Activated T-helper 1 cell treated with anti-CD3 and anti-CD28 coated beads, Interleukin-12 subunit alpha, Interleukin-12 subunit beta, Interleukin-2, Interleukin-4 antibody, amounts not matched to agents 30 ng/mL and 10 ng/mL and 1 ng/mL, durations not matched to agents 14 hours and 24 hours and 36 hours (primary cell): ENCODE measurements at regions of chr12 and their contacts with region 1.

Region 1: GRCh38 chr12:120495723-120496412 is at the start of gene DYNLL1:
- DNase-seq: peak; percentile 98
- H3K4me3 Mint-ChIP-seq: peak within 1 kb of the TSS; percentile 99
- H3K27ac Mint-ChIP-seq: peak within 1 kb of the TSS; percentile 89
- H3K4me1 Mint-ChIP-seq: peaks cover 37% of the 10 kb centered on the region
- H3K27me3 Mint-ChIP-seq: no peaks in the 10 kb centered on the region
- total RNA-seq, gene DYNLL1: 341 and 356 TPM in 2 replicates

Region 2: DNA sequence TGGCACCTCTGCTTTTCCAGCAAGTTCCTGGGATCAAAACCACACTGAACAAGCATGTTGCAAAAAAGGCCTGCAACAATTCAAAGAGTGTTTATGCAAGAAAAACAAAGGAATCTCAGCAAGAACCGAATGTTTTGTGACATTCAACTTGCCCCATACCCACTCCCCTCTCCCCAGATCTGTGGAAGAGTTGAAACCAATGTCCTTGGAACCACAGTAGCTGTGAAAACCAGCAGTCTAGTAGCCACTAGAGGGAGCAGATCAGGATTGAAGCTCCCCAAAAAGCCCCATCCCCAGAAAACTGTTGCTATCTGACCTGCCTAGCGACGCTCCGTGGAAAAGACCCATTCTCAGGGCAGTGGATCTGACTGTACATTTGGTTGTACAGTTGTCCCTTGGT is 800.8 kb before region 1 on chr12:
- intact Hi-C with region 1: no loop called
- DNase-seq: no peak
- H3K4me3 Mint-ChIP-seq: no peak overlapping the region
- H3K27ac Mint-ChIP-seq: no peak overlapping the region
- H3K4me1 Mint-ChIP-seq: no peaks in the 10 kb centered on the region
- H3K27me3 Mint-ChIP-seq: no peaks in the 10 kb centered on the region

Region 3: GRCh38 chr12:120317224-120318105 is 178.4 kb before region 1 on chr12:
- intact Hi-C with region 1: loop called (anchors 1 kb)
- DNase-seq: peak; percentile 100
- H3K4me3 Mint-ChIP-seq: peak overlapping the region; percentile 89
- H3K27ac Mint-ChIP-seq: peak overlapping the region; percentile 92
- H3K4me1 Mint-ChIP-seq: peaks cover 16% of the 10 kb centered on the region
- H3K27me3 Mint-ChIP-seq: peaks cover 6% of the 10 kb centered on the region

Region 4: DNA sequence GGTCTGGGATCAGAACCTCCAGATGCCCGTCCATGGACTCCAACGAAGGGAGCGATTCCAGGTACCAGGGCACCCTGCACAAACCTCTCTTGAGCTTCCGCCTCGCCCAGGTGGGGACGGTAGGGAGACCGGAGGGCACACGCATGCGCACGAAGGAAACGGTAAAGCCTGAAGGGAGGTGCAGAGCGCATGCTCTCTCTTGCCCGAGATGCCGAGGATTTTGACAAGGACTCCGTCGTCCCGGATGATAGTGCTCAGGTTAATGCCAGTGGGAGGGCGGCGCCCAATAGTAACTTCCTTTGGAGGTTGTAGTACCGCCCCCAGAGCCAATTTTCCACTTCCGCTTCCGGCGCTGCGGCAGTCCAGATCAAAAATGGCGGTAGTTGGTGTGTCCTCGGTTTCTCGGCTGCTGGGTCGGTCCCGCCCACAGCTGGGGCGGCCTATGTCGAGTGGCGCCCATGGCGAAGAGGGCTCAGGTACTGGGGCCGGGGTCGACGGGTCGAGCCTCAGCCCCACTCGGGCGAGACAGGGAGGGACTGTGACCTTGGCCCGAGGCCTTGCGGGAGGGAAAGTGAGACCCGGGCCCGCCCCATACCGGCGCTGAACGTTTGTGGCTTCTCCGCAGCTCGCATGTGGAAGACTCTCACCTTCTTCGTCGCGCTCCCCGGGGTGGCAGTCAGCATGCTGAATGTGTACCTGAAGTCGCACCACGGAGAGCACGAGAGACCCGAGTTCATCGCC is 57.9 kb before region 1 on chr12 and contains the start of gene COX6A1:
- intact Hi-C with region 1: loop called (anchors 1 kb)
- DNase-seq: peak; percentile 97
- H3K4me3 Mint-ChIP-seq: peak within 1 kb of the TSS; percentile 100
- H3K27ac Mint-ChIP-seq: peak within 1 kb of the TSS; percentile 98
- H3K4me1 Mint-ChIP-seq: peaks cover 31% of the 10 kb centered on the region
- H3K27me3 Mint-ChIP-seq: no peaks in the 10 kb centered on the region
- total RNA-seq, gene COX6A1: 352 and 365 TPM in 2 replicates

Region 5: DNA sequence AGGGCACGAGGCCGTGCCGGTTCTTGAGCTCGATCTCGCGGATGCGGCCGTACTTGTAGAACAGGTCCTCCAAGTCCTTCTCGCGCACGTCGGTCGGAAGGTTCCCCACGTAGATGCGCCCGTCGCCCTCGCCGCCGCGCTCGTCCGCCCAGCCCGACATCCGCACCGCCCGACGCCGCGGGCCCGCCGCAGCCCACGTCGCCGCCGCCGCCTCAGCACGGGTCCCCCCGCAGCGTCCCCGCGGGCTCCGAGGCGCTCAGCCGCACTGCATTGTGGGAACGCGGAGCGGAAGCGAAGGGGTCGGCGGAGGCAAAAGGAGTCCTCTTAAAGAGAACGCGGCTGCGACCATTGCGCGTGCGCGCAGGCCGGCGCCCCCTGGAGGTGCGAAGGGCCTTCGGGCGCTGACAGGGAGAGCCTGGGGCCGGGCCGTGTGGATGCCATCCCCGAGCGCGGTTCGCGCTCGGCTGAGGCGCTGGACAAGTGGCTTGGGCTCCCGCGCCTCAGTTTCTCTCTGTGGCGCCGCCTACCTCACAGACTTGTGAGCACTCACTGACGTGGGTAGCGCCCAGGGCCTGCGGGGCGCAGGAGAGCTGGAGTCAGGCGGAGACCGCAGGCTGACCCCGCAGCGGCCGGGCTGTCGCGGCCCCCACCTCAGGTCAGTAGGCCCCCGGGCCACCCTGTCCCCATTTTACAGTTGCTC is 26.3 kb before region 1 on chr12 and contains the start of gene SRSF9:
- intact Hi-C with region 1: loop called (anchors 1 kb)
- DNase-seq: peak; percentile 97
- H3K4me3 Mint-ChIP-seq: peak within 1 kb of the TSS; percentile 95
- H3K27ac Mint-ChIP-seq: peak within 1 kb of the TSS; percentile 87
- H3K4me1 Mint-ChIP-seq: peaks cover 52% of the 10 kb centered on the region
- H3K27me3 Mint-ChIP-seq: peaks cover 2% of the 10 kb centered on the region
- total RNA-seq, gene SRSF9: 233 and 239 TPM in 2 replicates

Region 6: DNA sequence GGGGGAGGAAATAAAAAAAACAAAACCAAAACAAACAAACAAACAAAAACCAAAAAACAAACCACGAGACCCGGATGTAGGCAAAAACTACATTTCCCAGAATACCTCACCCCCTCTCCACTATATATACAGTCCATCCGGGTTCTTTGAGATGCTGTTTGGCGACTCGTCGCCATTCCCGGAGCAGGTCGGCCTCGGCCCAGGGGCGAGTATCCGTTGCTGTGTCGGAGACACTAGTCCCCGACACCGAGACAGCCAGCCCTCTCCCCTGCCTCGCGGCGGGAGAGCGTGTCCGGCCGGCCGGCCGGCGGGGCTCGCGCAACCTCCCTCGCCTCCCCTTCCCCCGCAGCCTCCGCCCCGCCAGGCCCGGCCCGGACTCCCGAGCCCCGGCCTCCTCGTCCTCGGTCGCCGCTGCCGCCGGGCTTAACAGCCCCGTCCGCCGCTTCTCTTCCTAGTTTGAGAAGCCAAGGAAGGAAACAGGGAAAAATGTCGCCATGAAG is 38.4 kb after region 1 on chr12 and contains the start of gene RNF10:
- intact Hi-C with region 1: loop called (anchors 1 kb)
- DNase-seq: peak; percentile 79
- H3K4me3 Mint-ChIP-seq: peak within 1 kb of the TSS; percentile 96
- H3K27ac Mint-ChIP-seq: peak within 1 kb of the TSS; percentile 94
- H3K4me1 Mint-ChIP-seq: peaks cover 53% of the 10 kb centered on the region
- H3K27me3 Mint-ChIP-seq: no peaks in the 10 kb centered on the region
- total RNA-seq, gene RNF10: 170 and 181 TPM in 2 replicates

Region 7: GRCh38 chr12:120804428-120804827 is 308.6 kb after region 1 on chr12:
- intact Hi-C with region 1: no loop called
- DNase-seq: no peak
- H3K4me3 Mint-ChIP-seq: no peak overlapping the region
- H3K27ac Mint-ChIP-seq: no peak overlapping the region
- H3K4me1 Mint-ChIP-seq: peaks cover 24% of the 10 kb centered on the region
- H3K27me3 Mint-ChIP-seq: no peaks in the 10 kb centered on the region

Region 8: DNA sequence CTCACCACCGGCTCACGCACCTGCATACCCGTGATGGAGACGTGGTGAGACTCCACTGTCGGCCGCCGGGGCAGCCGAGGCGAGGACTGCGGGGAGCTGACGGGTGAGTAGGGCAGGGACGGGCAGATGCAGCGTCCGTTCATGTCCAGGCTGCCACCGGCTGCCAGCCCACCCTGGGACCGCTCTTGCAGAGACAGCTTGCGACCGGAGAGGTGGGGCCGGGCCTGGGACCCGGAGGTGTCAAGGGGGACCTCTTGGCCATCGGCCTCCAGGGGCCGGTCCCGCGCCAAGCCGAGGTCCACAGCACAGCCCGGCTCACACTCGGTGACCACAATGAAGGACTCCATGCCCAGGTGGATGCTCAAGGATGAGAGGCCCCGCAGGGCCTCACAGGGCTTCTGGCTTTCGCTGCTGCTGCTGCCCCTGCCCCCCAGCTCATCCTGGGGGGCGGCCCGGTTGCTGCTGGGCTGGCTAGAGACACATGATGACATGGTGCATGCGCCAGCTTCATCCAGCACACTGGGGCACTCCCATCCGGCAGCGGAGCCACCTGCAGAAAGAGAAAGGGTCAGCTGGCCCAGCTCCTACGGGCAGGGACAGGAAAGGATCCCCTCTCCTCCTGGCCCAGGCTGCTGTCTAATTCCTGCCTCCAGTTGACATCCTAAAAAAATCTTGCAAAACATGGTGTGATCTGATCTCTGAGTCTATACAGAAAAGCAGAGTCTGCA is 778.3 kb after region 1 on chr12:
- intact Hi-C with region 1: no loop called
- DNase-seq: no peak
- H3K4me3 Mint-ChIP-seq: no peak overlapping the region
- H3K27ac Mint-ChIP-seq: no peak overlapping the region
- H3K4me1 Mint-ChIP-seq: peaks cover 8% of the 10 kb centered on the region
- H3K27me3 Mint-ChIP-seq: no peaks in the 10 kb centered on the region

Region 9: DNA sequence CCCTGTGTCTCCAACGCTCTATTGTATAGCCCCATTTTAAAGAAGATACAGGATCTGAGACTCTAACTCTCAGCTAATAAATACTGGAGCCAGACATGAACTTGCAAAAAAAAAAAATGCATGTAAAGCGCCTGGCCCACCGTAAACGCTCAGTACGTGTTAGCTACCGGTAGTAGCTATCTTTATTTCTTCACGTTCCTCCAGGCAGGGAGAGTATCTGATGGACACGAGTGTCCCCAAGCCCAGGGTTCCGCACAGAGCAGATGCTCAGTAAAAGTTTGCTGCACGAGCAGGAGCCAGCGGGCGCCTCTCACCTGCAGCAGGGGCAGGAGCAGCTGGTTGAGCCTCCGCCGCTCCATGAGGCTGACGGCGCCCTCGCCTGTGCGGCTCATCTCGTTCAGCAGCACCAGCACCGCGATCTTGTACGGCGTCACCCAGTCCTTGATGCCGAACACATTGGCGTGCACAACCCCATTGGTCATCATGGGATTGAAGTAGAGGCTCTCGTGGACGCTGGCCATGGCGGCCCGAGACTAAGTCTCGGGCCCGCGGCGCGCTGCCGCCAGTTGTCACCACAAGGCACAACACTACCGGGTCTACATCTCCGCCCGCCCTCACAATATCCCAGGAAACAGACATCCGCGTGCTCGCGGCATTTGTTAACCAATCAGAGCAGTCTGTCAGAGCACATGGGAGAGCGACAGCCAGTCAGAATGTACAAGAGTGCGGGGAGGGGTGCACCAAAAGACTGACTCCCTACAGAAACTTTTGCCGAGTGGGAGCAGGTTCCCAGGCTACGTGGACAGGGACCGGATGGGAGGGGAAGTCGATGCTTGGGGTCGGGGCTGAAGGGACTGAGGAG is 856.2 kb after region 1 on chr12 and contains the start of gene ANAPC5:
- intact Hi-C with region 1: loop called (anchors 1 kb)
- DNase-seq: peak; percentile 90
- H3K4me3 Mint-ChIP-seq: peak within 1 kb of the TSS; percentile 95
- H3K27ac Mint-ChIP-seq: peak within 1 kb of the TSS; percentile 98
- H3K4me1 Mint-ChIP-seq: peaks cover 33% of the 10 kb centered on the region
- H3K27me3 Mint-ChIP-seq: peaks cover 10% of the 10 kb centered on the region
- total RNA-seq, gene ANAPC5: 139 and 144 TPM in 2 replicates